ENCODE measurements at regions of chr22 and their contacts with region 1.

Region 1: GRCh38 chr22:40636380-40637182 is at the start of gene MRTFA:
- DNase-seq: peak; percentile 100
- H3K4me3 ChIP-seq: peak within 1 kb of the TSS; percentile 78
- H3K27ac ChIP-seq: peak within 1 kb of the TSS; percentile 66
- H3K4me1 ChIP-seq: peaks cover 15% of the 10 kb centered on the region
- H3K27me3 ChIP-seq: no peaks in the 10 kb centered on the region
- total RNA-seq, gene MRTFA: 49.2 and 59.2 TPM in 2 replicates

Region 2: GRCh38 chr22:40436505-40437451 is 199.8 kb before region 1 on chr22:
- in situ Hi-C with region 1: loop called (anchors 25 kb)
- DNase-seq: peak; percentile 73
- H3K4me3 ChIP-seq: peak overlapping the region; percentile 42
- H3K27ac ChIP-seq: peak overlapping the region; percentile 80
- H3K4me1 ChIP-seq: peaks cover 22% of the 10 kb centered on the region
- H3K27me3 ChIP-seq: no peaks in the 10 kb centered on the region

Region 3: GRCh38 chr22:40525249-40525884 is 111.2 kb before region 1 on chr22:
- in situ Hi-C with region 1: loop called (anchors 10 kb)
- DNase-seq: peak; percentile 63
- H3K4me3 ChIP-seq: no peak overlapping the region
- H3K27ac ChIP-seq: peak overlapping the region; percentile 6
- H3K4me1 ChIP-seq: peaks cover 42% of the 10 kb centered on the region
- H3K27me3 ChIP-seq: no peaks in the 10 kb centered on the region

Measured in GM23248 (cell line).